Heart left ventricle (tissue), 16 donors: ENCODE measurements at regions of chr12 and their contacts with region 1.

Region 1: DNA sequence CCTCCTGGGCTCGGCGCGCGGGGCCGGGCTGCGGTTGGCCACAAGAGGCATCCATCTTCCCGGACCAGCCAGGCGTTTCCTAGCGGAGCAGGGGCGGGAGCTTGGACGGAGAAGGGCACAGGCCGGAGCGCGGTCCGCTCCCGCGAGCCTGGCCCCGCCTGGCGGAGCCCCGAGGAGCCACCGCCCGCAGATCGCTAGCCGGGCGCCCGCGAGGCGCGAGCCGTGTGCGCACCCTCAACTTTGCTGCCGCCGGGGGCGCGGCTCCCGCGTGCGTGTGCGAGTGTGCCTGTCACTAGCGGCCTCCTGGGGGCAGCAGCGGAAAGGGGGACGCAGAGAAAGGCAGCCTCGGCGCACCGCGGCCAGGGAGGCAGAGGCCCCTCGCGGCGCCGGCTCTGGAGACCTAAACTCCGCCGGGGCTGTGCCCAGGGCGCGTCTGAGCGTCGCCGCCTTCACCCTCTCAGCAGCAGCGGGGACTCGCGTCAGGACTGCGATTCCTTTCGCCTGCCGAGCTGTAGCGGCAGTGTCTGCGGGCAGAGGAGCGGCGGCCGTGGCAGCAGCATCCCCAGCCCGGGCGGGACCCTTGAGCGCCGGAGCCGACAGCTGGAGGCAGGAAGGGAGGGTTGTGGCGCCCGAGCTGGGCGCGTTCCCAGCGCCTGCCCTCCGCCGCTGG is 644 bp upstream of the SRGAP1 start:
- DNase-seq: peak; percentile 92 to 96 (median 94)
- ATAC-seq: peak; percentile 84 to 95 (median 92)
- H3K4me3 ChIP-seq: peak overlapping the region; percentile 63 to 100 (median 94)
- H3K27ac ChIP-seq: peak overlapping the region; percentile 79 to 96 (median 94)
- H3K4me1 ChIP-seq: peaks cover 0 to 36% (median 9%) of the 10 kb centered on the region in 12 donors
- H3K27me3 ChIP-seq: no peaks in the 10 kb centered on the region
- CTCF ChIP-seq: peak; percentile 88 to 99 (median 96)
- POLR2A ChIP-seq: no peak

Region 2: DNA sequence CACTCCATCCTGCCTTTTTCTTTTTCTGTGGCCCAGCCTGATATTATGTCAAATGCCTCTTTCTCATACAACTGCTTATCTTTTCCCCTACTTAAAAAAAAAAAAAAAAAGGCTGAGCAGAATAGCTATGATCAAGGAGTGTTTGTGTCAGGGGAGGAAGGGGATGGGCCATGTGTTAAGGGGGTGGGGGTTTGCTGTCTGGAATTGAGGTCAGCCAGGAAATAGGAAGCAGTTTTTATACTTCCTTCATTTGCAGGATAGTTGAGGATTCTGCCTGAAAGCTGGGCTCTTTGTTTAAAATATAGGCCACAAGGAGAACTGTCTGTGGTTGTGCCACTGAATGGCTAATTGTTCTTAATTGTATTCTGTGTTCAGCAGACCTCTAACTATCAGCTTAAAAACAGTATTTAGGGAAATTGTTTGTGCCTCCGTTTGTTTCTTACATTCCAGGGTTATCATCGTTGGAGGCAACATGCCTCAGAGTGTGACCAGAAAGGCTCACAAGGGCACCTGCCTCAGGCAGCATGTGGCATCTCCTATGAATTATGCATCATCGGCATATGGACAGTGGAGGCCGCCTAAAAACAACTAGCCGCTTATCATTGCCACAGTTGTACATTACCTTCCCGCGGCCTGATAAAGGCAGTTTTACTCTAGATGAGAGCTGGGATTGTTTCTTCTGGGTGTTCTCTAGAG is 96.6 kb after region 1 on chr12:
- intact Hi-C with region 1: loop called in 2 of 10 experiments (anchors 10 kb)
- DNase-seq: peak in 1 of 5 donors; percentile 29
- ATAC-seq: peak in 3 of 4 donors; percentile 39 to 84 (median 63)
- H3K4me3 ChIP-seq: no peak overlapping the region
- H3K27ac ChIP-seq: peak overlapping the region in 9 of 12 donors; percentile 9 to 56 (median 32)
- H3K4me1 ChIP-seq: peaks cover 0 to 63% (median 21%) of the 10 kb centered on the region in 12 donors
- H3K27me3 ChIP-seq: no peaks in the 10 kb centered on the region
- CTCF ChIP-seq: no peak
- POLR2A ChIP-seq: no peak

Region 3: DNA sequence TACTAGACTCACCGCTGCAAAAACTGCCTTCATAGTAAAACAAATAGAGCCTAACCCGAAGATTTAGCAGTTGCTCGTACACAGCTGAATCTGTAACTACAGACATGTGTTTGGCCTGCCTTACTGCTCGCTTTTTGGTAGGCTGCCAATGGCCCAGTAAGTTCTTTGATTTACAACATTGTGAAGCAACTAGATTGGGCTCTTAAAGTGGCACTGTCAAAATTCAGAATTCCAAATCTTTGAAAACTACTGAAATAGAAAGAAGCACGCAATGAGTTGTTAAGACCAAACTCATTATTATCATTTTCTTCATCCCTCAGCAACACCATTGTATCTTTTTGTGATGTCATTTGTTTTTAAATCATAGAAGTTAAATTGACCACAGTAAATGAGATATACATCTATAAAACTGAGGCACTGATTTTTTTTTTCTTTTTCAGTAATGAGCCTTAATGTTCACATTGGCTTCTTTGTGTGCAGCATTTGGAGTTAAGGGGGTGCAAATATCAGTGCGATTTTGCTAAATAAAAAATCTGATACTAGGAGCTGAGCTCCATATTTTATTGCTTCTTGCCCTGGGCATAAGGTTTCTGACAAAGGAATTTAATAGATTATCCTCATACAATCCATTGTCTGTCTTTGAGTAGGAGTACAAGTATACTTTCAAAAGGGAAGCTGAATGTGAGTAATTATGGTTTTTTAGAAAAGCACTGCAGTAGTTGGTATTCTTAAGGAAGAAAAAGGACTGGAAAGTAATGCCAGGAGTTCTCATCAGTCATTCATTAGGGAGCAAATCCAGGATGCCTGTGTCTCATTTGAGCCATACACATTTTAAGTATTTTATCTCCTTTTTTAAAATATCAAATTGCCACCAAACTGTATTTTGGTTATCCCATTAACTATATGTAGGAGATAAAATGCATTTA is 239.7 kb after region 1 on chr12:
- intact Hi-C with region 1: loop called in 5 of 10 experiments (anchors 5 to 10 kb)
- DNase-seq: peak in 4 of 5 donors; percentile 81 to 85 (median 84)
- ATAC-seq: peak; percentile 88 to 91 (median 90)
- H3K4me3 ChIP-seq: peak overlapping the region in 1 of 12 donors; percentile 6
- H3K27ac ChIP-seq: peak overlapping the region; percentile 35 to 84 (median 74)
- H3K4me1 ChIP-seq: peaks cover 0 to 52% (median 26%) of the 10 kb centered on the region in 12 donors
- H3K27me3 ChIP-seq: no peaks in the 10 kb centered on the region
- CTCF ChIP-seq: no peak
- POLR2A ChIP-seq: no peak

Region 4: DNA sequence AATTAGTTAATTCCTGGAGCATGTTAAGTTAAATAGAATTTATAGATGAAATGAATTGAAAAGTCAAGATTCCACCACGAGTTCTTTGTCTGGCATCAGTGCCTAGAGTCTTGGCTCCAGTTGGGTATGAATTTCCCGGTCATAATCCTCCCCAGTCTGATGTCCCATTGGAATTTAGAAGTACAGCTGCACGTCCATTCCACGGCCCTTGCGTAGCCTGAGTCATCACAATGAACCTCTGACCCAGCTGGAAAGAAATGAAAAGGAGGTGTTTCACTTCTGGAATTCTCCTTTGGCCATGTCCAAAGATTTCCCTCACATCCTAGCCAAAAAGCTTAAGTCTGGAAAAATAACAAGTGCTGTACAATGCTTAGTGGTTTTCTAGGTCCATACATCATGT is 255.5 kb after region 1 on chr12:
- intact Hi-C with region 1: loop called in 4 of 10 experiments (anchors 5 to 10 kb)
- DNase-seq: peak in 4 of 5 donors; percentile 22 to 66 (median 45)
- ATAC-seq: peak; percentile 78 to 92 (median 83)
- H3K4me3 ChIP-seq: no peak overlapping the region
- H3K27ac ChIP-seq: peak overlapping the region in 4 of 12 donors; percentile 25 to 63 (median 48)
- H3K4me1 ChIP-seq: peaks cover 0 to 22% (median 9%) of the 10 kb centered on the region in 12 donors
- H3K27me3 ChIP-seq: no peaks in the 10 kb centered on the region
- CTCF ChIP-seq: no peak
- POLR2A ChIP-seq: no peak

Region 5: DNA sequence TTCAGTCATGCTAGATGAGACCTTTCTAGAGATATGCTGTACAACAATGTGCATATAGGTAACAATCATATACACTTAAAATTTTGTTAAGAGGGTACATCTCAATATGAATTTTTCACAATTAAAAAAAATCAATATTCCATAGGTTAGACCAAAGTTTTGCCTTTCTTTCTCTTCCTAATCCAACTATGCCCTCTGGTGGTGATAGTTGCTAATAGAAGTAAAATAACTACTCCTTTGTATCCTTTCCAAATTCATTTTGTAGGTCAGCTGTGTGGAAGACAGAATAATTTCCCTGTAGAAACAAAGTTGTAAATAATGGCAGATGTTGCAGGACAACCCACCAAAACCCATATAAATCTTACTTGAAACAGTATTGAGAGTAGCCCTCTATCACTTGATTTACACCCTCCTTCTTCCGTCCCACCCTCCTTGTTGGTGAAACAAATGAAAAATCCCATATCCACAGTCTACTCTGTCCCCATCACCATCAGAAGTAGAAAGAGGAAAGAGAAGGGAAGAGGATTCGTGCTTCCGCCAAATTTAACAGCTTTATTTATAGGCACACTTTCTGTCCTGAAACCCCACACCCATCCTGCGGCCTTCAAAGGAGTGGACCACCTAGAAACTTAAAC is 412.4 kb after region 1 on chr12:
- intact Hi-C with region 1: loop called in 9 of 10 experiments (anchors 1 to 5 kb)
- DNase-seq: no peak
- ATAC-seq: peak in 2 of 4 donors; percentile 43 to 50
- H3K4me3 ChIP-seq: peak overlapping the region in 2 of 12 donors; percentile 2 to 5
- H3K27ac ChIP-seq: no peak overlapping the region
- H3K4me1 ChIP-seq: peaks cover 0 to 13% (median 0%) of the 10 kb centered on the region in 12 donors
- H3K27me3 ChIP-seq: no peaks in the 10 kb centered on the region
- CTCF ChIP-seq: peak; percentile 57 to 85 (median 74)
- POLR2A ChIP-seq: no peak

Region 6: DNA sequence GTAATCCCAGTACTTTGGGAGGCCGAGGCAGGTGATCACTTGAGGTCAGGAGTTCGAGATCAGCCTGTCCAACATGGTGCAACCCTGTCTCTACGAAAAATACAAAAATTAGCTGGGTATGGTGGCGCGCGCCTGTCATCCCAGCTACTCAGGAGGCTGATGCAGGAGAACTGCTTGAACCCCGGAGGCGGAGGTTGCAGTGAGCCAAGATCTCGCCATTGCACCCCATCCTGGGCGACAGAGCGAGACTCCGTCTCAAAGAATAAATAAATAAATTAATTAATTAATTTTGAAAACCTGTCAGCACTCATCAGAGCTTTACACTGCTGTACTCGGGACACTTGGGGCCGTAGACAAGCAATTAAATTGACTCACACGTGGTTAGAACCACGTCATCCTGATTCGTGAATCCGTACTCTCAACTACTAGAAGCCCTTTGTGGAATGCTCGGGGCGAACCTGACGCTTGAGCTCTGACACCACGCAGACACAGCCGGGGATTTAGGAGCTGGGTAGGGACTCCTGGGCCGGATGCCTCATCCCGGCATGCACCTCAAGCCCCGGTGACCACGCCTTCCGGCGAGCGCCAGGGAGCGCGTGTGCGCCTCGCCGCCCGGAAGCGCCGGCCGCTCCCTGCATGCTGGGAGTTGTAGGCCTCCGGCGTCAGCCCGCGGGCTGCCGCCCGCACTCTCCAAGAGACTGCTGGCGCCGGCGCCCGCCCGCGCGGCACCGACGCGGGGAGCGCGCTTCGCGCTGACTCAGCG is 560.0 kb after region 1 on chr12 and contains the start of gene XPOT:
- intact Hi-C with region 1: loop called in 4 of 10 experiments (anchors 5 to 10 kb)
- DNase-seq: peak; percentile 94 to 98 (median 96)
- ATAC-seq: peak; percentile 96 to 99 (median 96)
- H3K4me3 ChIP-seq: peak within 1 kb of the TSS; percentile 73 to 99 (median 90)
- H3K27ac ChIP-seq: peak within 1 kb of the TSS; percentile 90 to 99 (median 96)
- H3K4me1 ChIP-seq: peaks cover 0 to 20% (median 8%) of the 10 kb centered on the region in 12 donors
- H3K27me3 ChIP-seq: no peaks in the 10 kb centered on the region
- CTCF ChIP-seq: no peak
- POLR2A ChIP-seq: peak in 1 of 2 donors; percentile 46
- total RNA-seq, gene XPOT: 12.3 to 37.6 (median 22.0) TPM